Right cardiac atrium (tissue), 5 donors: ENCODE measurements at regions of chr20 and their contacts with region 1.

Region 1: DNA sequence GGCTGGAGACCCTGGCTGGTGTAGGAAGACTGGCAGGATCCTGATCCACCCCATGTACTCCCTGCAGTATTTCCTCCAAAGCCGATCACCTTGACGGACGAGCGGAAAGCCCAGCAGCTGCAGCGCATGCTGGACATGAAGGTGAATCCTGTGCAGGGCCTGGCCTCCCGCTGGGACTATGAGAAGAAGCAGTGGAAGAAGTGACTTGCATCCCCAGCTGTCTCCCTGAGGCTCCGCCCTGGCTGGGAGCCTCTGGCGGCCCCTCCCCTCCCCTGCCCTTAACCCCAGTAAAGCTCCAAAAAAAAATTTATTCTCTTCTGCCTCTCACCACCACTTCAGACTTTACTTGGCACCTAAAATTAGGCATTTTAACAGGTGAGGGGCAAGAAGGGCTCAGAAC is 7.0 kb downstream of the COX4I2 start:
- DNase-seq: no peak
- ATAC-seq: no peak
- H3K4me3 ChIP-seq: no peak overlapping the region
- H3K27ac ChIP-seq: no peak overlapping the region
- H3K4me1 ChIP-seq: no peaks in the 10 kb centered on the region
- H3K27me3 ChIP-seq: no peaks in the 10 kb centered on the region

Region 2: DNA sequence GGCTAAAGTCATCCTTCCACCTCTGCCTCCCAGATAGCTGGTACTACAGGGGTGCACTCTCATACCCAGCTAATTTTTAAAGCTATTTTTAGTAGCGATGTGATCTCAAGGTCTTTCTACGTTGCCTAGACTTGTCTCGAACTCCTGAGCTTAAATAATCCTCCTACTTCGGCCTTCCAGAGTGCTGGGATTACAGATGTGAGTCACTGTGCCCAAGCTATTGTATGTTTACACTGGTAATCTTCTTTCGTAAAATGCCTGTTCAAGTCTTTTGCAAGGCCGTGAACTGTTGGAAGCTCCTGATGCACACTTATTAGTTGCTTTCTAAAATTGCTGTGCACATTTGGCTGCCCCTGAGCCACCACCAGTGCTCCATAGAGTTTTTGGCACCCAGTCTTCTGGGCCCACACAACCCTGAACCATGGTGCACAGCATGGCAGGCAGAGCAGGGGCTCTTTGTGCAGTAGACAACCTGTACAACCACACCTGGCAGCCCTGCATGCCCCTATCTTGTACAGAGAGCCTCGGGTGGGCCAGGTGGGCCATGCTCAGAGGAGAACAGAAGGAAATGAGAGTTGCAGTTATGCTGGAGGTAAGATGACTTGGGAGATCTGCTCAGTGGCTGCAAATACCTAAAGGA is 273.9 kb after region 1 on chr20:
- intact Hi-C with region 1: loop called in 1 of 4 experiments (anchors 10 kb)
- DNase-seq: no peak
- ATAC-seq: no peak
- H3K4me3 ChIP-seq: no peak overlapping the region
- H3K27ac ChIP-seq: no peak overlapping the region
- H3K4me1 ChIP-seq: no peaks in the 10 kb centered on the region
- H3K27me3 ChIP-seq: no peaks in the 10 kb centered on the region